ENCODE measurements at regions of chr14 and their contacts with region 1.

Region 1: DNA sequence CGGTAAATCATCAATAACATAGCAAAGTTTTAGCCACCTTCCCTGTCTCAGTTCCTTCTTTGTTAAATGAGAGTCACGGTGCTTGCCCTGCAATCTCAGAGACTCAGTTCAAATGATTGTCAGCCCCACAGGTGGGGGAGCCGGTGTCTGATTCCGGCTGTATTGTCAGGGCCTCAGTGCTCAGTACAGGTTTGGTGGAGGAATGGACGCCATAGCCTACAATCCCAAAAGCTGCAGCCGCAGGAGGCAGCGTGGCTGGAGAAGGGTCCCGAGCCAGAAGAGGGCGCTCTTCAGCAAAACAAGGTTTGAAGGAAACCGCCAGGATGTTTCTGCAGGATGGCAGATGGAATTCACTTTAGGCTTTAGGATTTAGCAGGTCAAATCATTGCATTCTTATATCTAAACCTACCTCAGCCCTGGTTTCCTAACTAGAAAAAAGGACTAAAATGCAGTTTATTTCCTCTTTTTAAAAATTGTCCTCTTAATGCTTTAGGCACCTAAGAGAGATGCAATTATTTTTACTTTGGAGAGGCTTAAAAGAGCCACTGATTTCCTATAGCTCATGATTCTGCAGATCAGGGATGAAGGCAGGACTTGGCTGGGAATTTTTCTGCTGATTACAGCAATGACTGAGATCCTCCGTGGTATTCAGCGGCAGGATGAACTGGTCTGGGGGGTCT is 29.2 kb downstream of the FOS start:
- DNase-seq: no peak
- H3K4me3 ChIP-seq: no peak overlapping the region
- H3K27me3 ChIP-seq: no peaks in the 10 kb centered on the region
- CTCF ChIP-seq: peak; percentile 90

Region 2: DNA sequence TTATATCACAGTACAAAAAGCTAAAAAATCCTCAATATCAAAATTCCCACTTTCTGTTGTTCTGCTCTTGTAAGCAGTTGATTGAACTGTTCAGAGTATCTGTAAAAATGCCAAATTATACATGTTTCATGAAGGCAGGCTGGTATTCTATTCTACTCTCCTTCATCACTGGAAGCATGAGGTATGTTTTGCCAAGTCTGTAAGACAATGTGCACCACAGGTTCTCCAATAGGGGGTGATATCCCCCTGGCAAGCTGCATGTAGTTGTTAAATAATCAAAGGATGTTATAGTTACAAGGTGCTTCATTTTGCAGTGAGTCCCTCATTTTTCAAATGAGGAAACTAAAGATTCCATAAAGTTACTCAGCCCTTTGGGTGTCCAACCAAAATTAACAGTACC is 165.9 kb before region 1 on chr14:
- CTCF ChIA-PET with region 1: interaction called, 18 read pairs
- POLR2A ChIA-PET with region 1: no interaction called
- DNase-seq: no peak
- H3K4me3 ChIP-seq: no peak overlapping the region
- H3K27me3 ChIP-seq: no peaks in the 10 kb centered on the region
- CTCF ChIP-seq: peak; percentile 50

Region 3: DNA sequence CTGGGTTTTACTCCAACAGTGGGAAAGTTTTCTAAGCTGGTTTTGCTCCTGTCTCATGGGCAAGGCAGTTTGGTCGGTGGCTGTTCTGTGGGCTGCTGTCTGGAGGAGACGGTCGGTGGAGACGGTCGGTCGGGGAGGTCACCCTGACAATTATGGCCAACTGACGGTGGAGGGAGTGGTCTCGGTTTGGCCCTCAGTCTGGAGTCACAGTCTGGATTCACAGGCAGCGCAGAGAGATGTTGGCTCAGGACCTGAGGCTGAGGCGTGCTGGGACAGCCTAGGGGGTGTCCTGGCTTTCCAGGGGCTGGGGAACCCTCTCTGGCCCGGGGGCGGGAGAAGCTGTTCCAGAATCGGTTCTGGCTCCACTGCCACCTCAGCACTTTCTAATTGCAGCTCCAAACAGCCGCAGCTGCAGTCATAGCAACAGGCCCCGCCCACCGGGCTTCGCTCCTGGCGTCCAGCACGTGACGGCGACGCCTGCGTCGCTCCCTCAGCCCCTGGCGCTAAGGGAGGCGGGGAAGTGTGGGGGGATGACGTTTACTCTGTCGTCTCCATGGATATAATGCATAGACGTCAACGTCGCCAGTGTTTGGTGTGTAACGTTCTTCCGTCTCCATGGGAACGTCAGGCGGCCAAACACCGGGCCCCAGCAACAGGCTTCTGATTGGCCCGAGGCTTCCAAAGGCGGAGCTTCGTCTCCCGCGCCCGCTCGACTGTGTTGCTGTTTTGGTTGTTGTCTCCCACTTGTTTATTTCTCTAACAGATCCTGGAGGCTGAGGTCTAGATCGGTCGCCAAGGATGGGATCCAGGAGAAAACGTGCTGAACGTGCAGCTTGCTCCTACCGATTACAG is 49.0 kb before region 1 on chr14:
- CTCF ChIA-PET with region 1: no interaction called
- POLR2A ChIA-PET with region 1: no interaction called
- DNase-seq: peak; percentile 97
- H3K4me3 ChIP-seq: peak overlapping the region; percentile 40
- H3K27me3 ChIP-seq: no peaks in the 10 kb centered on the region
- CTCF ChIP-seq: no peak

Region 4: GRCh38 chr14:75350505-75351060 is 42.7 kb after region 1 on chr14:
- CTCF ChIA-PET with region 1: no interaction called
- POLR2A ChIA-PET with region 1: no interaction called
- DNase-seq: no peak
- H3K4me3 ChIP-seq: no peak overlapping the region
- H3K27me3 ChIP-seq: peaks cover 10% of the 10 kb centered on the region
- CTCF ChIP-seq: no peak

Region 5: DNA sequence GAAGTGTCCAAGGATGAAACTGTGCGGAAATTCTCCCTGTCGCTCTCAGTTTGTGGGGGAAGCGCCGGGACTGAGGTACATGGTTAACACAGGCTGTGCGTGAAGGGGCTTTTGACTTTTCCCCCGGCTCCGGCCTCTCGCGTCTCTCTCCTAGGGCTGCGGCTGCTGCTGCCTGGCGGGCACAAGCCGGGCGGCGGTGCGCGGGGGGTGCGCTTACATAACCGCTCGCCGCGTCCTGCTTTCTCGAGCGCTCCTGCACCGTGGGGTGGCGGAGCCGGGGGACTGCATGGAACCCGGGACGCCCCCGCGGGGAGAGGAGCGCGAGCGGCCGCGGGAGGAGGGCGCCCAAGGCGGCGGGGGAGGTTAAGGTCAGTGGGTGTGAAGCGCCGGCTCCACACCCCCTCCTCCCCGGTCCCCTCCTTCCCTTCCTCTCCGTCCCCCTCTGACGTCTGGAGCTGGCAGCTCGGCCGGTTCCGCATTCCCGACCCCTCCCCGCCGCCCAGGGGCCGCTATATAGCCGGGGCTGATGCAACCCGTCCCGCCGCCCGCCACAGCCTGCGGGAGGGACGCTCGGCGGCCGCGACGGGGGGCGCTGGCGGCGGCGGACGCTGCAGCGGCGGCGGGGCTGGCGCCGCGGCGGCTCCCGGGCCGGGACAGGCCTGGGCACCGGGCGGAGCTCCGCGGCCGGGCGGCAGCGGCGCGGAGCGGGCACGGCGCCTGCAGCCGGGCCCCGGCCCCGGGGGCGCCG is 119.8 kb after region 1 on chr14 and contains the start of gene JDP2:
- CTCF ChIA-PET with region 1: interaction called, 32 read pairs
- POLR2A ChIA-PET with region 1: no interaction called
- DNase-seq: no peak
- H3K4me3 ChIP-seq: peak within 1 kb of the TSS; percentile 84
- H3K27me3 ChIP-seq: no peaks in the 10 kb centered on the region
- CTCF ChIP-seq: 0 out of 2 replicates have a peak, but pooled peaks have one; percentile 11
- polyA plus RNA-seq, gene JDP2: 83.8 and 88.7 TPM in 2 replicates

Region 6: DNA sequence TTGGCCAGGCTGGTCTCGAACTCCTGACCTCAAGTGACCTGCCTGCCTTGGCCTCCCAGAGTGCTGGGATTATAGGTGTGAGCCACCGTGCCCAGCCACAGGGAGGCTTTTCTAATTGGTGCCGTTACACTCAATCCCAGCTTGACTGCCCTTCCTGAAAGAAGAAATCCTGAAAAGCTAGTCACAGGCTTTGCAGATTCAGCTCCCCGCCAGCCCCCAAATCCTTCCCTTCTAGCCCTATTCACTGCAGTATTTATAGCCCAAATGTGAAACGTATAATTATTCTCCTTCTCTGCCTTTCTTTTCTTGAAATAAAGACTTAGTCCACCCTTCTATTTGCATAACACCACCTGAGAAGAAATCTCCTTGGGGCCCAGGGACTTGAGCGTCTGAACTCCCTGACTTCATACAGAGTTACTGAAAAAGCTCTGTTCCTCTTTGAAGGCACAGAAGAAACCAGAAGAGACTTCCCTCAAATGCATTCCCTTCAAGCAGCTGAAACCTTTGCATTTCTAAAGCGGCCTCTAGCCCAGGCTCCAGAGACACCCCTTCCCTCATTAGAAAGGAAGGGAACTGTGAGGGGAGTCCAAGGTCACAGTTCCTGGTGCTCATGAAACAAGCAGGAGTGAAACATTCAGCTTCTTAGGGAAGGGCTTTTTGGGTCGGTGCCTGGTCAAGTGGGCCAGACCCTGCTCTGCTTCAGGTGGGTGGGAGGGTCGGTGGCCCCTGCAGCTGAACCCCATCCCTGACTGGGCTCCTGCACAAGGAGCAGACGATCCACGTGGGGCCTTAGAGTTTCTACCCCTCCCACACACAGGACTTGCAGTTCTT is 172.1 kb after region 1 on chr14:
- CTCF ChIA-PET with region 1: interaction called, 171 read pairs
- POLR2A ChIA-PET with region 1: no interaction called
- DNase-seq: no peak
- H3K4me3 ChIP-seq: no peak overlapping the region
- H3K27me3 ChIP-seq: peaks cover 3% of the 10 kb centered on the region
- CTCF ChIP-seq: no peak

Region 7: DNA sequence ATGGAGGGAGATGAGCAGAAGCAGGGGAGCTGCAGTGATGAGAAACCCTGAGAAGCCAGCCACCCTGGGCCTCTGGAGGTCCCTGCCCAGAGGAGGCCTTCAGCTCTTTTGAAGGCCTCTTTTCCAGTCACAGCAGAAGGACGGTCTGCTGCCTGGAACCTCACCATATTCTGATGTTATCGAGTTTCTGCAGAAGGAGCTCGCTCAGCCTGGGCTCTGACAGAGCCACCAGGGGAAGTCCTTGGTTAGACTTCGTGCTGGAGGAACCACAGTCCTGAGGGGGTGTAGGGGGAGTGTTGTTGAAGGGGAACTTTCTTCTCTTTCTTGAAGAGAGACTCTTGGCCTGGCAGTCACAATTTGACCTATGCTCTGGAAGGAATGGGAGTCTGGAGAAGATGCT is 189.4 kb after region 1 on chr14:
- CTCF ChIA-PET with region 1: interaction called, 28 read pairs
- POLR2A ChIA-PET with region 1: no interaction called
- DNase-seq: no peak
- H3K4me3 ChIP-seq: no peak overlapping the region
- H3K27me3 ChIP-seq: peaks cover 1% of the 10 kb centered on the region; the same call in 1 of the 2 replicates
- CTCF ChIP-seq: no peak